Psoas muscle (tissue), 8 donors: ENCODE measurements at regions of chr3 and their contacts with region 1.

Region 1: GRCh38 chr3:9302425-9303181 is 53.2 kb upstream of the SRGAP3 start:
- DNase-seq: peak; percentile 78 to 86
- ATAC-seq: peak; percentile 92 to 98 (median 94)
- H3K4me3 ChIP-seq: peak overlapping the region; percentile 49
- H3K27ac ChIP-seq: no peak overlapping the region
- H3K4me1 ChIP-seq: peaks cover 7% of the 10 kb centered on the region
- H3K27me3 ChIP-seq: peaks cover 0 to 2% (median 0%) of the 10 kb centered on the region in 3 donors
- CTCF ChIP-seq: peak; percentile 93

Region 2: DNA sequence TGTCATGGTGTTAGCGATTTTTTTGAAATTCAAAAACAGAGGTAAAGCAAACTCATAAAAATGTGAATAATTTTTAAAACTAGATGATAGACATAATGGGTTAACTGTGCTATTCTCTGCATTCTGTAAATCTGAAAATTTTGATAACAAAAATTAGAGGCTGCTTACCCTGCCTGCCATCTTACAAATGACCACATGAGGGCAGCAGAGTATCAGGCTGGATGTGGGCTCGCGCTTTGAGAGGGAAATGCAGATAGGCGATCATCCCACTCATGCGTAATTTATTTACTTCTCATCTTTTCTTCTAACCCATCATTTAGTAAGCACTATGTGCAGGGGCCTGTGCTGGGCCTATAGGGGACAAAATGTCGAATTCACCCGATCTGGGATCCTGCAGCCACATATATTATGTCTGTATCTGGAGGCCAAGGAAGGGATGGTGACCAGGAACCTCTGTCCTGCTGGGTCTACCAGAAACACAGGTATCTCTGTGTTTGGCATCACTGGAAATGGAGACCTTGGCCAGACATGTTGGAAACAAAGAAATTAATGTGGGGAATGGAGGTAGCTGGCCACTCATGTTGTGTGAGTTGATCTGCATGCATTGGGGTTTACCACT is 331.5 kb before region 1 on chr3:
- intact Hi-C with region 1: loop called (anchors 1 to 2 kb)
- DNase-seq: no peak
- ATAC-seq: peak; percentile 69 to 91 (median 79)
- H3K4me3 ChIP-seq: no peak overlapping the region
- H3K27ac ChIP-seq: no peak overlapping the region
- H3K4me1 ChIP-seq: no peaks in the 10 kb centered on the region
- H3K27me3 ChIP-seq: peaks cover 0 to 4% (median 0%) of the 10 kb centered on the region in 3 donors
- CTCF ChIP-seq: peak; percentile 99

Region 3: DNA sequence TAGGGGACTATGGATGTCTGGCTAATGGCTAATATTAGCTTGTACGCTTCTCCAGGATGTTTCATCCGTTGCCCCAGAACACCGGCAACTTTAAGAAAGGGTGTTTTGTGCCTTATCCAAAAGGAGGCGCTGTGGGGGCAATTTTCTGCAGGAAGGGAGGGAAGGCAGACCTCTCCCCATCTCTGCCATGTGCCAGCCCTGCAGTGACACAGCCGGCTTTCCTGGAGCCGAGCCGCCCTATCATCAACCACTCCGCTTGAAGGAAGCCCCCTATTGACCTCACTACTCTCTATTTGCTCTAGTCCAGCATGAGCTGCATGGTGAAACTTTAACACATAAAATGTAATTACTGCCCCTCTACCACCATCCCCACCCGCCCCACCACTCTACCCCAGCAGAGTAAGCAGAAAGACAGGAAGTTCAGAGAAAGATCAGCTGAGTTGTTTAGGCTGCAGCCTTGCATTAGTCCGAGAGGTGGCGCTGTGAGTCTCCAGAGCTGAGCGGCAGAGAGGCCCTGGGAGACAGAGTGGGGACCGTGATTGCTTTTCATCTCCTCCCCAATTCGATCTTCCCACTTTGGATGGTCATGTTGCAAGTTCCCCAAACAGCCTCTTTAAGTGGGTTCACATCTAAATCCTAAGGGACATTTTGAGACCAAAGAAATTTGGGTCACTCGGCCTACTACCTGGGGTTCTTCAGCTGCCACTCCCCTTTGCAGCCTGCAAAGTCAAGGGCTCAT is 314.8 kb before region 1 on chr3:
- intact Hi-C with region 1: loop called (anchors 5 kb)
- DNase-seq: peak; percentile 59 to 75
- ATAC-seq: peak; percentile 70 to 89 (median 76)
- H3K4me3 ChIP-seq: no peak overlapping the region
- H3K27ac ChIP-seq: no peak overlapping the region
- H3K4me1 ChIP-seq: no peaks in the 10 kb centered on the region
- H3K27me3 ChIP-seq: no peaks in the 10 kb centered on the region
- CTCF ChIP-seq: peak; percentile 66

Region 4: DNA sequence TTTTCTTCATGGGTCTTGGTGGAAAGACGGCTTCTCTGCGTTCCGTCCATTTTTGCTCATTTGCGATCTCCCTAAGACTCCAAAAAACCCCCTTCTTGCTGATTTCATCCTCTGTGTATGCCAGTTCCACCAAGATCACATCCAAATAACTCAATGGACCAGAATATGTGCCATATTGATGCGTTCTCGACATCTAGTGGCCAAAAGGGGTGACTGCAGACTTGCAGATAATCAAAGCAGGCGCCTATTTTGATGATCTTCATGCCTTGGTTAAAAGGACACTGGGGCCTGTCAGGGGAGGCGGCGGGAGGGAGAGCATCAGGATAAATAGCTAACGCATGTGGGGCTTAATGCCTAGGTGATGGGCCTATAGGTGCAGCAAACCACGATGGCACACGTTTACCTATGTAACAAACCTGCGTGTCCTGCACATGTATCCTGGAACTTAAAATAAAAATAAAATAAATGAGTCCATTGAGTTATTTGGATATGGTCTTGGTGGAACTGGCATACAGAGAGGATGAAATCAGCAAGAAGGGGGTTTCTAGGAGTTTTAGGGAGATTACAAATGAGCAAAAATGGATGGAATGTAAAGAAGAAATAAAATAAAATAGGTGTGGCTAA is 235.1 kb before region 1 on chr3:
- intact Hi-C with region 1: loop called in 1 of 2 experiments (anchors 5 kb)
- DNase-seq: peak in 1 of 2 donors; percentile 33
- ATAC-seq: peak; percentile 67 to 93 (median 76)
- H3K4me3 ChIP-seq: no peak overlapping the region
- H3K27ac ChIP-seq: no peak overlapping the region
- H3K4me1 ChIP-seq: no peaks in the 10 kb centered on the region
- H3K27me3 ChIP-seq: no peaks in the 10 kb centered on the region
- CTCF ChIP-seq: peak; percentile 95

Region 5: DNA sequence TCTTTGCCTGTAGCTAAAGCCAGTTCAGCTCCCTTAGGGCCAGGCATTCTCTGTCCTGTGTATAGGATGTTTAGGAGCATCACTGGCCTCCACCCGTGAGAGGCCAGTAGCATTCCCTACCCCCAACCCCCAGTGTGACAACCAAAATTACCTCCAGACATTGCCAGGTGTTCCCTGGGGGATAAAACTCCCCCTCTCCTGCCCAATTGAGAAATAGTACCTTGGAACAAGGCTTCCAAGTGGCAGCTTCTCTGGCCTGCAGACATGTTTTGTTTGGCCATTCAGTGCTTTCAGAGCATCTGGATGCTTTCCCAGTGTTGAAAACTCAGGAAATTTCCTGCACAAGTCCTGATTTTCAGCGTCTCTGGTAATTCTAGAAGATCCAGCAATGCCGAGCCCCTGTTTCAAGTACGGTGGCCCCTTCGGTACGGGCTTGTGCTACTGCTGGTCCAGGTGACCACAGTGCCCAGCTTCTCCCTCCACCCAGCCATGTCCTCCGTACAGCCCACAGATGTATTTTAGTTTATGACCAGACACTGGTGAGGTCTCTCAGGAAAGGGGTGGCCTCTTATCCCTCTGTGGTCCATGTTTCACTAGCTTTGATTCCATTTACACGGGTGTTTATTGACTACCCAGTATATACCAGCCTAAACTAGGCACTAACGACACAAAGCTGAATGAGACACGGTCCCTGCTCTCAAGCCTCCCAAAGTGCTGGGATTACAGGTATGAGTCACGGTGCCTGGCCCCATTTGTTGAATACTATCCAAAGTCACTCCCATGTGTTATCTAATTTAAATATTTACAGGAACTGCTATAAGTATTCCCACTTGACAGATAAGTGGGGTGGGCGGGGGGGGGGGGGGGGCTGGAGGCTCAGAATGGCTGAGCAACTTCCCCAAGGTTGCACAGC is 213.9 kb before region 1 on chr3:
- intact Hi-C with region 1: loop called in 1 of 2 experiments (anchors 5 kb)
- DNase-seq: no peak
- ATAC-seq: peak; percentile 34 to 79 (median 63)
- H3K4me3 ChIP-seq: no peak overlapping the region
- H3K27ac ChIP-seq: no peak overlapping the region
- H3K4me1 ChIP-seq: no peaks in the 10 kb centered on the region
- H3K27me3 ChIP-seq: no peaks in the 10 kb centered on the region
- CTCF ChIP-seq: no peak